Sigmoid colon (tissue), 7 donors: ENCODE measurements at regions of chr11 and their contacts with region 1.

Region 1: GRCh38 chr11:62419314-62419929 is 589 bp downstream of the SCGB1A1 start:
- DNase-seq: no peak
- H3K4me3 ChIP-seq: no peak overlapping the region
- H3K27ac ChIP-seq: peak overlapping the region; percentile 63 to 81 (median 80)
- H3K4me1 ChIP-seq: peaks cover 0 to 65% (median 50%) of the 10 kb centered on the region in 4 donors
- H3K27me3 ChIP-seq: no peaks in the 10 kb centered on the region
- CTCF ChIP-seq: no peak
- EP300 ChIP-seq: no peak
- POLR2A ChIP-seq: no peak

Region 2: DNA sequence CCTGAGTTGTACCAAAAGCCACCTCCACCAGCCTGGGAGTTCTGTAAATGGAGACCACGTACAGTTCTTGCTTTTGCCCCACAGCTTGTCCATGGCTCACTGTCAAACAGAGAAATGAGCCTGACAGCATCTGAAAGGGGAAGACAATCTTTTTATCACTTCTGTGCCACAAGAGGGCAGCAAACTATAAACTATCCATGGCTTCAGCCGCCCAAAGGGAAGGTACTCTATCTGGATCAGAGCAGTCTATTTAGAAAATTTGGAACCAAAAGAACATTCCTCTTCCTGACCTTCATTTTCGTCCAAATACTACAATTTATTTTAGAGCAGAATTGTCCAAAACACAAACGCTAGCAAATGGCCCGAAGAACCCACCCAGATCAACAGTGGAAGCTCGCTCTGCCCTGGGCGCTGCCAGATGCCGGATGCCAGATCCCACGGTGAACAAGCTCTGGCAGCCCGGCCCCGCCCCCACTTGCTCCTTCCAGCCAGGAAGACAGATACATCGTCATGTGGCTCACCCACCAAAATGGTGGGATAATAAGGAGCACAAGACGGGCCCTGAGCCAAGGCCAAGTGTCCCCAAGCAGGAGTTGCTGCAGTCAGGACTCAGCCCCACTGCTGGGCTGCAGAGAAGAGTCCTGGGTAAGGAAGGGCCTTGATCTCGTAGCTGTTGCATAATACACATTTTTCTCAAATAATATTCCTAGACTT is 24.4 kb before region 1 on chr11:
- intact Hi-C with region 1: loop called (anchors 2 kb)
- DNase-seq: peak; percentile 94
- H3K4me3 ChIP-seq: peak overlapping the region in 3 of 4 donors; percentile 29 to 41 (median 40)
- H3K27ac ChIP-seq: peak overlapping the region; percentile 82 to 95 (median 86)
- H3K4me1 ChIP-seq: peaks cover 0 to 56% (median 49%) of the 10 kb centered on the region in 4 donors
- H3K27me3 ChIP-seq: no peaks in the 10 kb centered on the region
- CTCF ChIP-seq: peak; percentile 50 to 75 (median 68)
- EP300 ChIP-seq: no peak
- POLR2A ChIP-seq: no peak

Region 3: DNA sequence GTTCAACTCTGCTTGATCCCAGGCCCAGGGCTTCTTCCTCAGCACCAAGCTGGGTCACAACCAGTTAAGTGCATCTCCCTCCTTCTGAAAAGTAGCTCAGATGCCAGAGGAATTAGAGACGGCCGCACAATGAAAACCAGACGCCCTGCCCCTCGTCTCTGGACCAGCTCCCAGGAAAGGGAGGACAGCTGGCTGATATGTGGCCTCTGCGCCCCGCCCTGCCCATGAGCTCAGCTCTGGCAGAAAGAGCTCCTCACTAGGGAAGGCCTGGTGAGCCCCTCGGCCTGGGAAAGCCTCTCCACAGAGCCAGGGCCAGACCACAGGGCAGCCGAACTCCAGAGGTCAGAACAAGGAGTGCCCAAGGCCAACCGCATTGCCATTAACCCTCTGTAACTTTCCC is 18.7 kb before region 1 on chr11:
- intact Hi-C with region 1: loop called (anchors 2 kb)
- DNase-seq: peak; percentile 96
- H3K4me3 ChIP-seq: no peak overlapping the region
- H3K27ac ChIP-seq: peak overlapping the region; percentile 81 to 95 (median 86)
- H3K4me1 ChIP-seq: peaks cover 0 to 80% (median 79%) of the 10 kb centered on the region in 4 donors
- H3K27me3 ChIP-seq: no peaks in the 10 kb centered on the region
- CTCF ChIP-seq: no peak
- EP300 ChIP-seq: peak in 2 of 4 donors; percentile 61
- POLR2A ChIP-seq: no peak

Region 4: DNA sequence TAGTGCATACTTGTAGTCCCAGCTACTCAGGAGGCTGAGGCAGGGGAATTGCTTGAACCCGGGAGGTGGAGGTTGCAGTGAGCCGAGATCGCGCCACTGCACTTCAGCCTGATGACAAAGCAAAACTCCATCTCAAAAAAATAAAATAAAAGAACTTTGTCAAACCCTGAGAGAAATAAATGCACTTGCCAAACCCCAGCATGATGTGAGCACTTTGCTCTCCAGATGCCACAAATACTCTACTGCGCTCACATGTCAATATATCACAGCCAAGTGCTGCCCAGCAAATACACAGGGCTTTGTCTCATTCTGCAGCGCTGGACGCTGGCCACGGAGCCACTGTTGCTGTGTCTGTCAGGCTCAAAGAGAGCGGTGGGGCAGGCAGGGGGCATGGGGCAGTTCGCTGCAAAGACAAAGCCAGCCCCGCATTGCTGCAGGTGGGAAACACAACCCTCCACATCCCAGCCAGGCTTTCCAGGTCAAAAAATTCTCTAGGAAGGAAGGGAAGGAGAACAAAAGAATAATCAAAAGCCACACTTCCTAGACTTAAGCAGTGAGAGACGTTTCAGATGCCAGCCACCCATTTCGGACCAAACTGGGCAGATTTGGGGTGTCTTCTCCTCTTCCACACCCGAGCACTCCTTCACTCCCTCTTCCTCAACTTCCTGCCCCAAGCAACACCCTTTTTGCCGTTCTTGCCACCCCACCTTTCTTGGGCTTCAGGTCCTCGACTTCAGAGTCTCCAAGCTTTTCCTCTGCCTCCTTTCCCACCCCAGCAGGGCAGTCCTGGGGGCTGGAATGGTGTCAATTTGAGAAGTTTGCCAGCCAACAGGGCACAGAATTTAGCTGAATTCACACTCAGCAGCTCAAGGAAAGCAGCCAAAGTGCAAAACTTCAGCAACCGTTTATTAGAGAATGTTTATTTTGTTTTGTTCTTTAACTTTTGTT is 82.3 kb after region 1 on chr11:
- intact Hi-C with region 1: loop called (anchors 5 kb)
- DNase-seq: peak; percentile 80
- H3K4me3 ChIP-seq: peak overlapping the region in 1 of 4 donors; percentile 5
- H3K27ac ChIP-seq: peak overlapping the region; percentile 80 to 89 (median 84)
- H3K4me1 ChIP-seq: peaks cover 0 to 74% (median 70%) of the 10 kb centered on the region in 4 donors
- H3K27me3 ChIP-seq: no peaks in the 10 kb centered on the region
- CTCF ChIP-seq: no peak
- EP300 ChIP-seq: no peak
- POLR2A ChIP-seq: no peak

Region 5: GRCh38 chr11:62560566-62561103 is 141.2 kb after region 1 on chr11:
- intact Hi-C with region 1: loop called (anchors 5 kb)
- DNase-seq: peak; percentile 97
- H3K4me3 ChIP-seq: no peak overlapping the region
- H3K27ac ChIP-seq: peak overlapping the region; percentile 82 to 100 (median 92)
- H3K4me1 ChIP-seq: peaks cover 0 to 45% (median 41%) of the 10 kb centered on the region in 4 donors
- H3K27me3 ChIP-seq: no peaks in the 10 kb centered on the region
- CTCF ChIP-seq: peak in 3 of 4 experiments; percentile 84 to 90 (median 86)
- EP300 ChIP-seq: no peak
- POLR2A ChIP-seq: no peak

Region 6: GRCh38 chr11:62794201-62794775 is 374.9 kb after region 1 on chr11:
- intact Hi-C with region 1: no loop called
- DNase-seq: no peak
- H3K4me3 ChIP-seq: no peak overlapping the region
- H3K27ac ChIP-seq: no peak overlapping the region
- H3K4me1 ChIP-seq: peaks cover 0 to 29% (median 24%) of the 10 kb centered on the region in 4 donors
- H3K27me3 ChIP-seq: no peaks in the 10 kb centered on the region
- CTCF ChIP-seq: no peak
- EP300 ChIP-seq: no peak
- POLR2A ChIP-seq: no peak